HEK293 (cell line): ENCODE measurements at regions of chr1 and their contacts with region 1.

Region 1: DNA sequence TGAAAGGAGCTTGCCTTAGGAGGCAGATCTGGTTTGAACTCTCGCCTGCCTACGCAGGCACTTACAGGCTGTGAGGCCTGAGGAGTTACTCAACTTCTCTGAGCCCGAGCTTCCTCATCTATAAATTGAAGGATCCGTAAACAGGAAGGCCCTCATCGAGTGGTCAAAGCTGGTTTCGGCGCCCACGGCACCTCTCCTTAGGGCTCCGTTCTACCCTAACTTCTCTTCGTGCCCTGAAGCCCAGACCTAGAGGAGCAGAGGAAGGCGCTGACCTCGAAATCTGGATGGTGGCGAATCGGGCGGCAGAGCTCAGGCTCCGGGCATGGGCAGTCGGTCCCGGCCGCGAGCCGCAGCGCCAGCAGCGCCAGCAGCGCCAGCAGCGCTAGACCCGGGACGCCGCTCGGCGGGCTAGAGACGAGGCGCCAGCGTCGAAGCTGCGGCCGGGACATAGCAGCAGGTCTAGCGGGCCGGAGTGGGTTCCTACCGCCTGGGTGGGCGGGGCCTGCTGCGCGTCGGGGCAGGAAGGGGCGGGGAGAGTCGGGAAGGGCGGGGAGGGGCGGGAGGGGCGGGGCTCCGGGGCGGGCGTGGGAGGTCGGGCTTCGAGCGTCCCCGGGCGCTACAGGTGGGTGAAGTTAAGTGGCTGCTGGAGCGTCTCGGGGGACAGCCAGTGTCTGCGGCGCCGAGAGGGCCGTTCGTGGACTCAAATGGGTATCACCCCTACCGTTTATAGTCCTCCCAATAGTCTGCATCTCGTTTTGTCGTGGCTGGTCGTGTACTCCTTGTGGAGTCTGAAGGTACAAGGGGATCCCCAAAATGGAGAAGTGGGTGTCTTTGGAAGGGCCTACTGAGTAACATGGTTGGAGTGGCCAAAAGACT is at the start of gene CTBS:
- H3K4me3 ChIP-seq: peak within 1 kb of the TSS; percentile 63
- H3K27ac ChIP-seq: peak within 1 kb of the TSS; percentile 93
- H3K4me1 ChIP-seq: no peaks in the 10 kb centered on the region
- CTCF ChIP-seq: peak; percentile 57

Region 2: DNA sequence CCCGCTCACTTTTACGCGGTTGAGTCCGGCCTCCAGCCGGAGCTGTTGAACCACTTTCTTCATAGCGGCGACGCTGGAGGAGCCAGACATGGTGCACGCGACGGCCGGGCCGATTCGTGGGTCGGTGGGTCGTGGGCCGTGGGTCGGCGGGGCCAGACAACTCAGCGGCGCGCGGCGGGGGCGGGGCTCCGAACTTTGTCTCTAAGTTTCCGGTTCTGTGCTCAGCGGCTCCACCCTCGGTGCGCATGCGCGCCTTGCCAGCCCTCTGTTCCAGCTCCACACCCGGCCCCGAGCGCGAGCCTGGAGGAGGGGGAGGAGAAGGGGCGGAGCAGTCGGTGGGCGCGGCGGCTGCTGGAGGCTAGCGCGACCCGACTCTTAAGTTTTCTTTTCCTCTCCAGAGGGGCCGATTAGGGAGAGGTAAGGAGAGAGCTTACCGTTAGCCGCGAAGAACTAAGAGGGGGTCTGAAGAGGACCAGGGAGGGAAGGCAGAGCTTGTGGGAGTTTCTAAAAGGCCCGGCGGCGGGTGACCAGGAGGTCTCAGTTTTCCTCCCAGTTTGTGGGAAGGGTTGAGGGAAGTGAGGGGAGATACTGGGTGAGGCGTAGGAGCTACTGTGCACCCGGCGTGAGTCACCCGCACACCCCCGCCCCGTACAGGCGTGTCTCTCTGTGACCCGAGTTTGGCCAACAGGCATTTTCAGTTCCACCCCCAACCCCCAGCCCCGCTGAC is 68.0 kb before region 1 on chr1 and contains the starts of genes GNG5 and SPATA1:
- CTCF ChIA-PET with region 1: interaction called, 5 read pairs
- POLR2A ChIA-PET with region 1: interaction called, 20 read pairs
- H3K4me3 ChIP-seq: peak within 1 kb of the TSS; percentile 88
- H3K27ac ChIP-seq: peak within 1 kb of the TSS; percentile 76
- H3K4me1 ChIP-seq: peaks cover 5% of the 10 kb centered on the region; the same call in 1 of the 2 replicates
- CTCF ChIP-seq: no peak

Region 3: DNA sequence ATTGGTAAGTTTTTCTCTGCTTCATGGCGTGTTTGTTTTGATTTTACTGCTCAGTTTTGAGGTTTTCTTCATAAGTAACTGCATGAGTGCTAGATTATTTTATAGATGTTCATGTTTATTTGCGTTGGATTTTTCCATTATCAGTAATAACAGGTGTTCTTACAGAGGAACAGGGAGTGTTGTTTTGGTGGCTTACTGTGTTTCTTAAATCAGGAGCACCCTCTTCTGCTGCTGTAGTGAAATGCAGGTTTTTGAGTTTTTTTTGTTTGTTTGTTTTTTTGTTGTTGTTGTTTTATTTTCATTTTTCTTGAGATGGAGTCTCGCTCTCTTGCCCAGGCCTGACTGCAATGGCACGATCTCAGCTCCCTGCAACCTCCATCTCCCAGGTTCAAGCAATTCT is 32.5 kb before region 1 on chr1:
- CTCF ChIA-PET with region 1: no interaction called
- POLR2A ChIA-PET with region 1: no interaction called
- H3K4me3 ChIP-seq: no peak overlapping the region
- H3K27ac ChIP-seq: no peak overlapping the region
- H3K4me1 ChIP-seq: no peaks in the 10 kb centered on the region
- CTCF ChIP-seq: peak; percentile 77

Region 4: DNA sequence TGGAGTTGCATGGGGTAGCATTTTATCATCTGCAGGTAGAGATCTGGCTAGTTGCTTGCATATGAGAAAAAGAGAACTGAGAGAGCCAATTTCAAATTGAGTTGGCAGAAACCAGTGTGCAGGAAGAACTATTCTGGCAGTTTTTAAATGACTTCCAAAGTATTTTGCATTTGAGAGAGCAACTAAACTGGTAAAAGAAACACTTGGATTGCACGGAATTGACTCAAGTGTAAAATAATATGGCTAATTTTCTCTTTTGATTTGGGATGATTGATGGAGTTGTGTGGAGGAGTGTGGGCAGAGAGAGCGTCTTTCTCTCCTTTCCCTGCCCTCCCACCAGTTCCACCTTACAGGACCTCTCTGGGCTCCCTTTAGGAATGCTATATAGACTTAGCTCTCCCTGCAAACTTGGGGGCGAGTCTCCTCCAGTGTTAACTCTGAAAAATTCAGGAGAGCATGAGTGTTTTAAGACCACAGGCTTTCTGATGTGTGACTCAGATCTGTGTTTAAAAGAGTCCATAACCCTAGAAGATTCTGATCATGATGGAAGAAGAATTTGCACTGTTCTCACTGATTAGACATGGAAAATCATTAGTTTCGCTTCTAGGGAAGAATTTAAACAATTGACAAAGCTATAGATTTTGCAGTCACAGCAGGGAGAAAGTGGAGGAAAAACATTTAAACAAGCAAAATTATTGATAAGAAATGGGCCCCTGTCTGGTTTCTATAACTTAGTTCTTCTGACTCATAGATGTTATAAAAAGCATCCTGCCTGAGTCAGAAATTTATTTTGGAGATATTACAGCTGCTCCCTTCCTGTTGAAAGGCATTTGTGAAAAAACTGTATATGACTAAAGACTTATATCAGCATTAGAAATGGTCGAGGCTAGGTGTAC is 24.9 kb after region 1 on chr1:
- CTCF ChIA-PET with region 1: no interaction called
- POLR2A ChIA-PET with region 1: no interaction called
- H3K4me3 ChIP-seq: no peak overlapping the region
- H3K27ac ChIP-seq: no peak overlapping the region
- H3K4me1 ChIP-seq: no peaks in the 10 kb centered on the region
- CTCF ChIP-seq: no peak

Region 5: DNA sequence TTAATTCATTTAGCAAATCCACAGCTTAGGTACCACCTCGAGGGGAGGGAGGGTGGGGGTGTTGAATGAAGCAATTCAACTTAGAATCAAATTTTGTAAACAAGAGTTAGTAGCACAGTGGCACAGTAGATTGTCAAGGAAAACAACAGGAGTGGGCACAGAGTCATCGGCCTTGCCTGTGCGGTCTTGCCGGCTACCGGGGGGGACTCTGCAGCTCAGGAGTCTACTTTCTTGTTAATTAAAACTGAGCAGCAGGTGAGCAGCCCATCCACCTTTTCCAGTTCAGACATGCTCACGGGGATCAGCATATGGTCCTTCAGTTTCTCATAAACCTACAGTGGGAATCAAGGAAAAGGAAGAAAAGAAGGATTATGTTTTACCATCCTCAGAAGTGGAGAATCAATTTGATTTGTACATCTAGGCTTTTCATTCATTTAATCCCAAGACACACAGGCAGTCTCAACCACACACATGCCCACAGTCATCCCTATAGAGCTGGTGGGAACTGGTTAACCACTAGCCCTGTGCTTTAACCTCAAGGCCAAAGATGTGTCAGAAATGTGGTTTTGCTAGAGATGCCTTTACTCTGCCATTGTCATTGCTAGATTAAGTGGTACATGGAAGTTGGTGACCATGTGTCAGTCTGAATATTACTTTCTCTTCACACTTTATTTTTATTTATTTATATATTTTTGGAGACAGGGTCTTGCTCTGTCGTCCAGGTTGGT is 747.2 kb after region 1 on chr1:
- CTCF ChIA-PET with region 1: no interaction called
- POLR2A ChIA-PET with region 1: interaction called, 10 read pairs
- H3K4me3 ChIP-seq: no peak overlapping the region
- H3K27ac ChIP-seq: no peak overlapping the region
- H3K4me1 ChIP-seq: peaks cover under 1% of the 10 kb centered on the region; the same call in 1 of the 2 replicates
- CTCF ChIP-seq: no peak